ENCODE measurements at regions of chr20 and their contacts with region 1.

Region 1: DNA sequence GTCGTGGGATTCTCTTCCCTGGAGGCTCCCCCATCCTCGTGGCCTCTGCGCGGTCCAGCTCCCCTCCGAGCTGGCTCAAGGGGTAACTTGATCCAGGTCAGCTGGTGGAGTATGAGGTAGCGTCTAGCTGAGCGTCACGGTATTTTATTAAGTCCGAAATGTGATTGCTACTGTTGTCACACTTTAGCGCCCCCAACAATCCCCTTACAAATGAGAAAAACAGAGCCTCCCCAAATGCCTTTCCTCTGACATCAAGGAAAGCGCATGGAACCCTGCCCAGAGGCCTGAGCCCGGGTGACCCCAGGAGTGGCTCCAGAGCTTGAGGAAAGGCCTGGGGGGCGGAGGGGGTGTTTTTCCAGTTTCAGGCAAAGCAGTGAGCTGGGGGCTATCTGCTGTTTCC is 192.4 kb downstream of the ZMYND8 start:
- H3K4me3 Mint-ChIP-seq: no peak overlapping the region
- H3K27ac Mint-ChIP-seq: no peak overlapping the region
- H3K4me1 Mint-ChIP-seq: no peaks in the 10 kb centered on the region
- H3K27me3 Mint-ChIP-seq: peaks cover 26% of the 10 kb centered on the region

Region 2: DNA sequence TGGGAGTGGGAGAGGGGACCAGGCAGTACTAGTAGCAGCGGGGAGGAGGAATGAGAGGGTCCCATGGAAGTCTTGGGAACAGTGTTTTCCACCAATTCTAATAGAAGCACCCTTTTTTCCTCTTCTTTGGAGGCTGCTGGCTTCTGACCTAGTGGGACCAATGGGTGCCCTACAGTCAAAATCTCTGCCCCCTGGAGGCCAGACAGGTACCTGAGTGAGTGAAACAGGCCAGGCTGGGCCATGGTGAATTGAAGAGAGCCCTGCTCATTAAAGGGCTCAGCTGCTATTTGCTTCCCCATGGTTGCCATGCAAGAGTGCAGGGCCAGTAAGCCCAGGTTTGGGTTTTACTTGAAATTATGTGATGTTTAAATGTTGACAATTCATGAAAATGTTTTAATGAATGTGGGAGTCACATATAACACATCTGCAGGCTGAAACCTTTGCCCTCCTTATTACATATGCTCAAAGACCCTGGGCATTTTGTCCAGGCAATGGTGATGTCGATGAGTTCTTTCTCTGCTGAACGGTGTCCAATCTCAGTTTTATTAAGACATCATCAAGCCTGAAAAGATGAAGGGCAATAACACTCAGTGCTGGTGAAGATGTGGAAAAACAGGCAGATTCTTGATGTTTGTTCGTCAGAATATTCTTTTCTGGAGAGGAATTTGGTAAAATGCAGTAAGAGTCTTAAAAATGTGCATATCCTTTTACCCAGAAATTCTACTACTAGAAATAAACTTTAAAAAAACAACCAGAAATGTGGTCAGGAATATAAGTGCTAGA is 571.4 kb before region 1 on chr20:
- intact Hi-C with region 1: no loop called
- H3K4me3 Mint-ChIP-seq: no peak overlapping the region
- H3K27ac Mint-ChIP-seq: no peak overlapping the region
- H3K4me1 Mint-ChIP-seq: no peaks in the 10 kb centered on the region
- H3K27me3 Mint-ChIP-seq: peaks cover 19% of the 10 kb centered on the region

Region 3: DNA sequence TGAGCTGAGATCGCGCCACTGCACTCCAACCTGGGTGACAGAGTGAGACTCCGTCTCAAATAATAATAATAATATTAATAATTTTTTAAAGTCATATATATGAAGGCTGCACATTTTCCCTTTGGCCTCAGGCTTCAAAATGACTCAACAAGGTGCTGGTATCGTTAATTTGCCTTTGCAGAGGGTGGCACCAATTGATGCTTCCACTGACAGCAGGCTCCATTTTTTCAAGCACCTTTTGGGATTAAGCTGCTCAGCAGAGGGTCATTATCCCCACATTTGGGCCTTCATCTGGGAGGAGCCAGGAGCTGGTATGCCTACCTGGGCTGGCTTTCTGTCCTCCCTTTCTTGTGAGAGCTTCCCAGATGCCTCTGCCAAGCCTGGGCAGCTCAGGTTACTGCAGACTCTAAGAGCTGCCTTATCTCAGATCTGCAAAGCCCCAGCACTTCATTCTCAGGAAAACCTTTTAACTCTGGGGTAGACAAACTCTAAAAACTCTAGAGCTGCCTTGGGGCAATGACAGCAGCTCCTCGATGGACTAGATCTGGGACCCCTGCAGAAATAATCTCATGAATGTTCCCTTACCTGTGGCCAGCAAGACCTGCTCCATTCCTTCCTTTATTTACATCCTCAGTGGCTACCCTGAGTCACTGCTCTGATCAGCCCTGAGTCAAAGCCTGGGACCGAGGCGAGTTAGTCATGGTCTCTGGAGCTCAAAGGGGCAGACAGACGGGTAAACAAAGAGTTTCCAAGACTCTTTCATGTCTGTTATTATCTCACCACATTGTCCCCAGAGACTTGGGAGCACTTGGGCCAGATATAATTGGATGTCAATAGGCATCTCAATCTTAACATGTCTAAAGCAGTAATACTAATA is 349.5 kb before region 1 on chr20:
- intact Hi-C with region 1: no loop called
- H3K4me3 Mint-ChIP-seq: no peak overlapping the region
- H3K27ac Mint-ChIP-seq: no peak overlapping the region
- H3K4me1 Mint-ChIP-seq: no peaks in the 10 kb centered on the region
- H3K27me3 Mint-ChIP-seq: peaks cover 43% of the 10 kb centered on the region

Region 4: DNA sequence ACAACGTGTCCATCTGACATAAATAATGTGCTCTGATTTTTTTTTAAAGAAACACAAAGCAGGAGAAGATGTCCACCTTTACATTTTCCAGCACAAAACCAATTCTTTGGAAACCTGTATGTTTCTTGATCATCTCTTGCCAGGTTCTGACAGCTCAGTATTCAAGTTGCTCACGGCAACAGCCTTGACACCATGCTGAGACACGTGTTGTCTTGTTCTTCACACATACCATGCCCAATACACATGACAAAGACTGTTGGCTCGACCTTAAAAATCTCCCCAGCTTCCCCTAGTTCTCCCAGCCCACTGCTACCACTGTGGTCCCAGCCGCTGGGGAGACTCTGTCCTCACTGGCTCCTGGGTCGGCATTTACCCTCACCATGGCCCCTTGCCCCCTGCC is 1144.7 kb after region 1 on chr20:
- intact Hi-C with region 1: loop called (anchors 10 kb)
- H3K4me3 Mint-ChIP-seq: no peak overlapping the region
- H3K27ac Mint-ChIP-seq: no peak overlapping the region
- H3K4me1 Mint-ChIP-seq: no peaks in the 10 kb centered on the region
- H3K27me3 Mint-ChIP-seq: peaks cover 15% of the 10 kb centered on the region